ENCODE measurements at regions of chr16 and their contacts with region 1.

Region 1: GRCh38 chr16:89241187-89242007 is 23.9 kb downstream of the ZNF778 start:
- DNase-seq: peak; percentile 46
- H3K4me3 ChIP-seq: peak overlapping the region; percentile 63 to 81
- H3K27ac ChIP-seq: peak overlapping the region; percentile 88 to 97
- H3K4me1 ChIP-seq: no peaks in the 10 kb centered on the region
- H3K27me3 ChIP-seq: no peaks in the 10 kb centered on the region
- CTCF ChIP-seq: no peak
- POLR2A ChIP-seq: peak; percentile 61

Region 2: DNA sequence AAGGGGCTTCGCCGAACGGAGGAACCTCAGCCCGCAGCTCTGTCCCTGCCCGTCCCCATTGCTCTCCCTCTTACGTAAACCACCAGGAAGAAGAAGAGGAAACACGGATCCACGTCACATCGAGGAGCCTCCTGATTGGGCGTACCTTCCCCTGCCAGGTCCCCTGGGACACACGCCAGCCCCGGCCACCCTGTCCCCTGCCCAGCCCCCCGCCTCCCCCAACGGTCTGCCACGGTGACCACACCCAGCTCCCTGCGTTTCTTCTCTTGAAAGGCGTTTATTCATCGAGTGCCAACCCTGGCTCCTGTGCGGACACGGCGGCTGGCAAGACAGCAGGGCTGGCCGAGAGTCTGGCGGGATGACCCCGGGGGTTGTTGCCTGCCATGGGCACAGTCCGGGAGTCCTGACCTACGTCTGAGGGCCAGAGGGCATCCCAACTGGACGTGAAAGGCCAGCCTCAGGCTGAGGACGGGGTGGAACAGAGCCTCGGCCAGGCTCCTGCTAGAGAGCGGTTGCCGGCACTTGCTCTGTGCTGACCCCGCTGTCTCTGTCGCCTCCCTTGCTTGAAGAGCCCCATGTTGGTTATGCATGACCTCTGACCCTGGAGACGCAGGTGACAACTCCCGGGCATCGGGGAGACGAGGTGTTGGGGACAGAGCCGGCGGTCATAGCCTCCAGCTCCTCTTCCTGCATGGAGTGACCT is 188.4 kb before region 1 on chr16:
- intact Hi-C with region 1: no loop called
- DNase-seq: peak; percentile 79
- H3K4me3 ChIP-seq: peak overlapping the region; percentile 32 to 40
- H3K27ac ChIP-seq: peak overlapping the region; percentile 67 to 79
- H3K4me1 ChIP-seq: no peaks in the 10 kb centered on the region
- H3K27me3 ChIP-seq: no peaks in the 10 kb centered on the region
- CTCF ChIP-seq: no peak
- POLR2A ChIP-seq: peak; percentile 78

Region 3: DNA sequence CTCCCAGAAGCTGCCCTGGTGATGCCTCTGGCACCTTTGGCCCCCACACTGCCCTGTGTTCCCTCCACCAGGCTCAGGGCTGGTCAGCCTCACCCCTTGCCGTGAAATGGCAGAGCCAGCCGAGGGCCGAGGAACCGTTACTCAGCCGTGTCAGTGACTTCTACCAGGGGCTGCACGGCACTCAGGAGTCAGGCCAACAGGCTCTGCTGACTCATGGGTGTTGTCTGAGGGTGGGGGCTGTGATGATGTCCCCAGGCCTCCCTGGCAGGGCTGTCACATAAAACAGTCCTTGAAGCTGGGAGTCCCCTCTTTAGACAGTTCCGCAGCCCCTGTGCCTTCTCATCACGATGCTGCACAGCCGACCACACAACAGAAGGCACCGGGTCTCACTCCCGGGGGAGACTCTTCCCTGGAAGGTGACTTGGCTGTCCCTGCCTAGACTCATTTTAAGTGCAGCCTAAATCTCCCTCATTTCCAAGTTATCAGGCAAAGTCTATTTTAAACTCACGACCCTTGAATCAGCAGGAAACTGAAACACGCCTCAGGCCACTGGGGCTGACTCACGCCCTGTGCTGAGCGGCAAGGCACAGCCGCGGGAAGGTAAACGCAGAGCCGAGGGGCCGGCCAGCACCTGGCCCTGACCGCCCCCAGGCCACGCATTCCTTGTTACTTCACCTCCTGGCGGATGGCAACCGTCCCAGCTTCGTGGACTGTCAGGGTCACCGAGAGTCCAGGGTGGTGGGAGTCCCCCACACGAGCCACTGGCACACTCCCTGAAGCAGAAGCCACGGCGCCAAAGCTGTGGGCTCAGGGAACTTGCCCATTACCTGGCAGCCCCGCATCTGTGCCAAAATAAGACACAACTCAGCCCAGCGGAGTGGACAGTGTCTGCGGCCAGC is 78.7 kb after region 1 on chr16:
- intact Hi-C with region 1: loop called (anchors 10 kb)
- DNase-seq: no peak
- H3K4me3 ChIP-seq: no peak overlapping the region
- H3K27ac ChIP-seq: peak overlapping the region; percentile 21 to 48
- H3K4me1 ChIP-seq: peaks cover 14% of the 10 kb centered on the region
- H3K27me3 ChIP-seq: no peaks in the 10 kb centered on the region
- CTCF ChIP-seq: no peak
- POLR2A ChIP-seq: no peak

Region 4: GRCh38 chr16:89641458-89642119 is 400.2 kb after region 1 on chr16:
- intact Hi-C with region 1: loop called (anchors 5 kb)
- DNase-seq: no peak
- H3K4me3 ChIP-seq: no peak overlapping the region
- H3K27ac ChIP-seq: no peak overlapping the region
- H3K4me1 ChIP-seq: no peaks in the 10 kb centered on the region
- H3K27me3 ChIP-seq: no peaks in the 10 kb centered on the region
- CTCF ChIP-seq: no peak
- POLR2A ChIP-seq: no peak

Measured in prostate gland (tissue), 2 donors.